ENCODE measurements at regions of chr3 and their contacts with region 1.

Region 1: GRCh38 chr3:57179580-57180410 is 14.6 kb upstream of the IL17RD start:
- DNase-seq: peak; percentile 30
- H3K4me3 ChIP-seq: no peak overlapping the region
- H3K27ac ChIP-seq: no peak overlapping the region
- H3K4me1 ChIP-seq: no peaks in the 10 kb centered on the region
- H3K27me3 ChIP-seq: peaks cover 13 to 16% of the 10 kb centered on the region in 2 experiments
- CTCF ChIP-seq: peak; percentile 22 to 30
- POLR2A ChIP-seq: no peak

Region 2: DNA sequence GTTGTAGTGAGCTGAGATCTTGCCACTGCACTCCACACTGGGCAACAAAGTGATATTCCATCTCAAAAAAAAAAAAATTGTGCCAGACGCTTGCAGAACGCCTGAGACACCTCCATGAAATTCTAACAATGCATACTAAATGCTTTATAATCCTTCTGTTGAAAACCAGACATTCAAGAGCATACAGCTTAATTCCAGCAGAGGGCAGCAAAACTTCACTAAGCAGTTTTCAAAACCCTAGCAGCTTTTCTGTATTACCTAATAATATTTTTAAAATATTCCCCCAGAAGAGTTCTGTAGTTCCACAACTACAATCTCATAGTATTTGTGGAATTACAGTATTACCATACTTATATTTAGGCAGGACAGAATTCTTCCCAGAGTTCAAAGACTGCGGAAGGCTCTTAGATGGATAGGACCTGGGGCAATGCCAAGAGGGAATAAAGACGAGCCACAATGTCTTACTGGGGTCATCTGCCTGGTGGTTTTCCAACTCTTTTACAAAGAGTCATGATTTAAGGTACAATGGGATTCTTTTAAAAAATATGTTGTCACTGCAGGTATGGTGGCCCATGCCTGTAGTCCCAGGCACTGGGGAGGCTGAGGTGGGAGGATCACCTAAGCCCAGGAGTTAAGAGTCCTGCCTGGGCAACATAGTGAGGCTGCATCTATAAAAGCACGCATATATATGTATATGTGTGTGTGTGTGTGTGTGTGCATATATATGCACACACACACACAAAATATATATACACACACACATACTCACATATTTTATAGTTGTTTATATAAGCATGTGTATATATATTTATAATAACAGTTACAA is 477.1 kb before region 1 on chr3:
- CTCF ChIA-PET with region 1: no interaction called
- POLR2A ChIA-PET with region 1: no interaction called
- dilution Hi-C with region 1: no loop called
- intact Hi-C with region 1: no loop called
- DNase-seq: peak; percentile 66
- H3K4me3 ChIP-seq: no peak overlapping the region
- H3K27ac ChIP-seq: no peak overlapping the region
- H3K4me1 ChIP-seq: no peaks in the 10 kb centered on the region
- H3K27me3 ChIP-seq: no peaks in the 10 kb centered on the region
- CTCF ChIP-seq: peak; percentile 56 to 61
- POLR2A ChIP-seq: no peak

Region 3: DNA sequence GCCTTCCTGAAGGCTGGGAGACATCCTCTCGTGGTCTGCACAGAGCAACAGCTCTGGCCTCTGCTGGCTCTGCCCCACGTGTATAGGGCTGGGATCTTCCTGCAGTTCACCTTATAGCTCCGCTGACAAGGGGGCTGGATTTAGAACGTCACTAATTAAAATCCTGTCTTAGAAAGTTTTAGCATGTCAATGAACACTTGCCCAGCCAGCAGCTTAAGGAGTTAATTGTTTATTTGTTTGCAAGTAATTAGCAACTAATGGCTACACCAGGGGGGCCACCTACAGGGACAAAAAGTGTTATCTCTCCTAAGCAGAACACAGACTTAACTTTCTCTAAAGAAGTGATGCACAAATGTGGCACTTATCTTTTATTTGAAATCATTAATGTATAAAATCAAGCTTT is 20.1 kb after region 1 on chr3 and contains the start of gene HESX1:
- CTCF ChIA-PET with region 1: interaction called, 15 read pairs
- POLR2A ChIA-PET with region 1: no interaction called
- dilution Hi-C with region 1: no loop called
- intact Hi-C with region 1: no loop called
- DNase-seq: no peak
- H3K4me3 ChIP-seq: no peak within 1 kb of the TSS
- H3K27ac ChIP-seq: no peak within 1 kb of the TSS
- H3K4me1 ChIP-seq: peaks cover 9% of the 10 kb centered on the region
- H3K27me3 ChIP-seq: no peaks in the 10 kb centered on the region
- CTCF ChIP-seq: no peak
- POLR2A ChIP-seq: no peak
- total RNA-seq, gene HESX1: 0.58 and 0.65 TPM in 2 replicates

Region 4: DNA sequence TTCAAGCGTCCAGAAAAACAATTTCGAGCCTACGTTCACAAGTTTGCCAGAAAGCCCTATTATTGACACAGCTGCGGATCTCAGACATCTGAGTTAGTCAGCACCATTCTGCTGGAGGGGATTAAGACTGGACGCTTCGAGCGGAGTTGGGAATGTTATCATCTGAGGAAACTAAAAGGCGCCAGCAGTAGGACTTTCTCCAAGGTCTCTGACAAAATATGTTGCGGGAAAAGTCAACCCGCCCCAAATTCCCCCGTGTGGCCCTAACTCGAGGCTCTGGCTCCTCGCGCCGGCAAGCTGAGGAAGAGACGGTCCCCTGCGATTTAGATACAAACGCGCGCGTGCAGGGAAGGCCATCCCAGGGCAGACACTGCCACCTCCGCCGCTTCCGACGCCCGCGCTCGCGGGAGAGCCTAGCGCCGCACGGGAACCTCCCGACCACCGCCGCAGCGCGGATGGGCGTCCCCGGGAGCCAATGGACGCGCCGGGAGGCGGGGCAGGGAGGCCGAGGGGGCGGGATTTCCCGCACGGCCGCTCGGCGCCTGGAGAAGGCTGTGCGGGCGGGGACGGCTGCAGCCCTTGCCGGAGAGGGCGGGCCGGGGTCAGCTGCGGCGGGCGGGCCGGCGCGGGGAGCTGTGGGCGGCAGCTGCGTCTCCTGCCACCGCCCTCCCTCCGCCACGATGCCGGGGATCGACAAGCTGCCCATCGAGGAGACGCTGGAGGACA is 47.6 kb after region 1 on chr3 and contains the start of gene APPL1:
- CTCF ChIA-PET with region 1: interaction called, 13 read pairs
- POLR2A ChIA-PET with region 1: no interaction called
- dilution Hi-C with region 1: no loop called
- intact Hi-C with region 1: no loop called
- DNase-seq: peak; percentile 94
- H3K4me3 ChIP-seq: peak within 1 kb of the TSS; percentile 85 to 98 (median 88)
- H3K27ac ChIP-seq: peak within 1 kb of the TSS; percentile 75
- H3K4me1 ChIP-seq: peaks cover 18% of the 10 kb centered on the region
- H3K27me3 ChIP-seq: no peaks in the 10 kb centered on the region
- CTCF ChIP-seq: no peak
- POLR2A ChIP-seq: peak; percentile 84
- total RNA-seq, gene APPL1: 28.8 and 29.7 TPM in 2 replicates

Region 5: DNA sequence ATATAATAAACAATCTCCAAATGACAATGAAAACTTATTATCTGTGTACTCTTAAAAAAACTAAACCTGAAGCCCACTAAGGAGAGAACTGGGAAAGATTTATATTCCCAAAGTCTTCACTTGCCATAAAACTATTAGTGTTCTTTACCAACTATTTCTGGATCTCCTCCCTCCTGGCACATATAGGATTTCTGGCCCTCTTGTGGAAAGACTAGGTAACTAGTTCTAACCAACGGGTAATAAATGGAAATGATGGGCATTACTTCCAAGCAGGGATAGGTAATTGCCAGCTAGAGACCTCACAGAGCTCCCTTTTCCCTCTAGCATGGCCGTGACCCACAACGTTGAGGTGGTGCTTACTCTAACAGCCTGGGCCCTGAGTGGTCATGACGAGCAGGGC is 254.2 kb after region 1 on chr3:
- CTCF ChIA-PET with region 1: interaction called, 15 read pairs
- POLR2A ChIA-PET with region 1: no interaction called
- dilution Hi-C with region 1: no loop called
- intact Hi-C with region 1: no loop called
- DNase-seq: peak; percentile 57
- H3K4me3 ChIP-seq: no peak overlapping the region
- H3K27ac ChIP-seq: no peak overlapping the region
- H3K4me1 ChIP-seq: no peaks in the 10 kb centered on the region
- H3K27me3 ChIP-seq: no peaks in the 10 kb centered on the region
- CTCF ChIP-seq: peak; percentile 24 to 48
- POLR2A ChIP-seq: no peak

Region 6: GRCh38 chr3:57852896-57853295 is 673.1 kb after region 1 on chr3:
- CTCF ChIA-PET with region 1: interaction called, 23 read pairs
- POLR2A ChIA-PET with region 1: no interaction called
- dilution Hi-C with region 1: no loop called
- intact Hi-C with region 1: no loop called
- DNase-seq: peak; percentile 54
- H3K4me3 ChIP-seq: no peak overlapping the region
- H3K27ac ChIP-seq: no peak overlapping the region
- H3K4me1 ChIP-seq: no peaks in the 10 kb centered on the region
- H3K27me3 ChIP-seq: no peaks in the 10 kb centered on the region
- CTCF ChIP-seq: peak in 1 of 2 donors; percentile 6
- POLR2A ChIP-seq: no peak

Measured in endothelial cell of umbilical vein (primary cell).